Prostate gland (tissue), 2 donors: ENCODE measurements at regions of chr1 and their contacts with region 1.

Region 1: DNA sequence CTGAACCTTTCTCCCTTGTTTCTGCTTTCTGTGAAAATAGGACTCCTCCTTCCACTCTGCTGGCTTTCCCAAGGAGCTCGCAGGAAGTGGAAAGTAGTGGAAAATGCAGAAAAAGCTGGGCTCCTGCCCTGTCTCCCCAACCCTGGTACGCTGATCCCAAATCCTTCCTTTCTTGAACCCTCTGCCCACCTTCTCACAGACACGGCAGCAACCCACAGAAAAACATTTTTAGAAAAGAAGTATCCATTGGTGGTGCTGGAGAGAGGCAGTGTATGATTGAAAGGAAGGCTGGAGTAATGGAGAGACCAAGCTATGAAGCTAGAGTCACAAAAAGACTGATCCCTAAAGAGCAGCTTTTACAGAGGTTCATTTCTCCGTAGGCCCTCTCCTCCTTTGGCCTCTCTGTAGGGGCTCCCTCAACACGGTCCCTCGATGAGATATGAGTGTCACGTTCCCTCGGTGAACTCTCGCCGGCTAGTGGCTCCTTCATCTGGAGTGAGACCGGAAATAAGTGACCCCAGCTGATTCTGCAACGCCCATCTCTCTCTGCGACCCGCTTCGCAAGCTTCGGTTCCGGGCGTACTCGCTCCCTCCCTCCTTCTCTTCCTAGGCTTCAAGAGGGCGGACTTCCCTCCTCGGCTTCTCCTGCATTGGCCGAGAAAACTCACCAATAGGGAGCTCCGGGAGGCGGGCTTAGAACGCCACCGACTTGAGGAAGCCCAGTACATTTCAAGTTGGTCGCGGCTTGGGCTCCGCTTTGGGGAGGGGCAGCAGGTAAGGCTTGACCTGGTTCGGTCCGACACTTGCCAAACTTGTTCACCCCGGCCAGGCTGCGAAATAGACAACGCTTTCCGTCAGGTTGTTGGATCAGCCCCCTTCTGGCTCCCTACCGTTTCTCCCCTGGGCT is at the starts of genes ANKRD34A and POLR3GL:
- DNase-seq: peak; percentile 98
- H3K4me3 ChIP-seq: peak within 1 kb of the TSS; percentile 42 to 46
- H3K27ac ChIP-seq: peak within 1 kb of the TSS; percentile 84 to 89
- H3K4me1 ChIP-seq: peaks cover 5% of the 10 kb centered on the region
- H3K27me3 ChIP-seq: no peaks in the 10 kb centered on the region
- CTCF ChIP-seq: peak in 2 of 4 experiments; percentile 25 to 40
- POLR2A ChIP-seq: peak; percentile 98
- total RNA-seq, gene ANKRD34A: 1.6 to 2.4 TPM
- total RNA-seq, gene POLR3GL: 20.3 to 23.2 TPM

Region 2: GRCh38 chr1:145751491-145752037 is 212.7 kb before region 1 on chr1:
- intact Hi-C with region 1: no loop called
- DNase-seq: no peak
- H3K4me3 ChIP-seq: no peak overlapping the region
- H3K27ac ChIP-seq: no peak overlapping the region
- H3K4me1 ChIP-seq: no peaks in the 10 kb centered on the region
- H3K27me3 ChIP-seq: no peaks in the 10 kb centered on the region
- CTCF ChIP-seq: no peak
- POLR2A ChIP-seq: no peak

Region 3: GRCh38 chr1:145918144-145918992 is 45.9 kb before region 1 on chr1 and contains the start of gene PEX11B:
- intact Hi-C with region 1: loop called (anchors 5 kb)
- DNase-seq: peak; percentile 87
- H3K4me3 ChIP-seq: peak within 1 kb of the TSS; percentile 64 to 94
- H3K27ac ChIP-seq: peak within 1 kb of the TSS; percentile 80 to 89
- H3K4me1 ChIP-seq: peaks cover 3% of the 10 kb centered on the region
- H3K27me3 ChIP-seq: no peaks in the 10 kb centered on the region
- CTCF ChIP-seq: peak in 2 of 4 experiments; percentile 22 to 33
- POLR2A ChIP-seq: peak; percentile 44
- total RNA-seq, gene PEX11B: 35.9 to 37.7 TPM

Region 4: GRCh38 chr1:146036965-146037646 is 72.9 kb after region 1 on chr1:
- intact Hi-C with region 1: loop called (anchors 5 kb)
- DNase-seq: peak; percentile 70
- H3K4me3 ChIP-seq: peak overlapping the region; percentile 55 to 60
- H3K27ac ChIP-seq: peak overlapping the region; percentile 89 to 92
- H3K4me1 ChIP-seq: peaks cover 2% of the 10 kb centered on the region
- H3K27me3 ChIP-seq: no peaks in the 10 kb centered on the region
- CTCF ChIP-seq: no peak
- POLR2A ChIP-seq: no peak